PC-3 (cell line): ENCODE measurements at regions of chr3 and their contacts with region 1.

Region 1: DNA sequence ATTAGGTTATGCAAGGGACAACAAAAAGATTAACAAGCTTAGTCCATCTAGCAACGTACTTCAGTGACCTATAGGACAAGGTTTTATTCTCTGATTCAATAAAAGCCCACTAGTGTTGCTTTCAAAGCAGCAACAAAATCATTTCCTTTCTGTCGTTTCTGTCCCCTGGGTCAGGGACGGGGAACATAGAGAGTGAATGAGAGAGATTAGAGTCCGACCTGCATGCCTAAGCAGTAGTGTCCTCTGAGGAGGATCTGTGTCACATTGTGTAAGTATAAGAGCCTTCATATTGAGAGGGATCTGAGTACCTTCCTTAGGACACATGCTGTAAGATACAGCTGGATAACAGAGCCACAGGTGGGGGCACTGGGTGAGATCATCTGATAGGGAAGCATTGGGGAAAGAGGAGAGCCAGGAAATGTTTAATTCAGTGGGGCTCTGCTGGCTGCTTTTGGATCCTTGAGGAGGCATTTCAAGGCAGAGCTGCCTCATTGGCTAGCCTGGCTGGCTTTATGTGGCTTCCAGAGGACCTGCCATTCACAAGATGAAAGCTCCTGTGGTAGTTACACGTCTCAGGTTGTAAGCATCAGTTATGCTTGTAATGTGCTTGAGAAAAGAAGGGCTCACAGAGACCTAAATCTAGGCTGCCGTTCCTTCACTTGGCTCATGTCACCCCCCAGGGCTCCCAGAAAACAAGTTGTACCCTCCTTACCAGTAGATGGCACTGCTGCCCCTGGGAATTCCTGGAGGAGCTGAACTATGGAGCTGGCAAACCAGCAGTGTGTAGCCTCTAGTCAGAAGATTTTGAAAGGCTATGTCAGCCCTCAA is 2.7 kb downstream of the TMEM108 start:
- DNase-seq: peak; percentile 77
- ATAC-seq: peak; percentile 88
- H3K4me3 ChIP-seq: no peak overlapping the region
- H3K27ac ChIP-seq: no peak overlapping the region
- H3K4me1 ChIP-seq: no peaks in the 10 kb centered on the region
- H3K27me3 ChIP-seq: peaks cover 42% of the 10 kb centered on the region
- CTCF ChIP-seq: peak; percentile 77

Region 2: GRCh38 chr3:132925256-132925930 is 115.5 kb before region 1 on chr3:
- CTCF ChIA-PET with region 1: no interaction called
- POLR2A ChIA-PET with region 1: no interaction called
- intact Hi-C with region 1: no loop called
- DNase-seq: no peak
- ATAC-seq: no peak
- H3K4me3 ChIP-seq: no peak overlapping the region
- H3K27ac ChIP-seq: no peak overlapping the region
- H3K4me1 ChIP-seq: no peaks in the 10 kb centered on the region
- H3K27me3 ChIP-seq: peaks cover 31% of the 10 kb centered on the region
- CTCF ChIP-seq: no peak

Region 3: GRCh38 chr3:133426721-133427120 is 385.8 kb after region 1 on chr3:
- CTCF ChIA-PET with region 1: interaction called, 3 read pairs
- POLR2A ChIA-PET with region 1: no interaction called
- intact Hi-C with region 1: loop called (anchors 2 kb)
- DNase-seq: no peak
- ATAC-seq: no peak
- H3K4me3 ChIP-seq: no peak overlapping the region
- H3K27ac ChIP-seq: no peak overlapping the region
- H3K4me1 ChIP-seq: no peaks in the 10 kb centered on the region
- H3K27me3 ChIP-seq: no peaks in the 10 kb centered on the region
- CTCF ChIP-seq: no peak